ENCODE measurements at regions of chr9 and their contacts with region 1.

Region 1: GRCh38 chr9:127943731-127944144 is 6.1 kb upstream of the DPM2 start:
- DNase-seq: peak; percentile 96

Region 2: GRCh38 chr9:127980706-127981558 is 37.2 kb after region 1 on chr9 and contains the start of gene EEIG1:
- intact Hi-C with region 1: loop called in 1 of 2 experiments (anchors 5 kb)
- DNase-seq: peak; percentile 99
- total RNA-seq, gene EEIG1: 54.3 to 56.9 TPM

Region 3: DNA sequence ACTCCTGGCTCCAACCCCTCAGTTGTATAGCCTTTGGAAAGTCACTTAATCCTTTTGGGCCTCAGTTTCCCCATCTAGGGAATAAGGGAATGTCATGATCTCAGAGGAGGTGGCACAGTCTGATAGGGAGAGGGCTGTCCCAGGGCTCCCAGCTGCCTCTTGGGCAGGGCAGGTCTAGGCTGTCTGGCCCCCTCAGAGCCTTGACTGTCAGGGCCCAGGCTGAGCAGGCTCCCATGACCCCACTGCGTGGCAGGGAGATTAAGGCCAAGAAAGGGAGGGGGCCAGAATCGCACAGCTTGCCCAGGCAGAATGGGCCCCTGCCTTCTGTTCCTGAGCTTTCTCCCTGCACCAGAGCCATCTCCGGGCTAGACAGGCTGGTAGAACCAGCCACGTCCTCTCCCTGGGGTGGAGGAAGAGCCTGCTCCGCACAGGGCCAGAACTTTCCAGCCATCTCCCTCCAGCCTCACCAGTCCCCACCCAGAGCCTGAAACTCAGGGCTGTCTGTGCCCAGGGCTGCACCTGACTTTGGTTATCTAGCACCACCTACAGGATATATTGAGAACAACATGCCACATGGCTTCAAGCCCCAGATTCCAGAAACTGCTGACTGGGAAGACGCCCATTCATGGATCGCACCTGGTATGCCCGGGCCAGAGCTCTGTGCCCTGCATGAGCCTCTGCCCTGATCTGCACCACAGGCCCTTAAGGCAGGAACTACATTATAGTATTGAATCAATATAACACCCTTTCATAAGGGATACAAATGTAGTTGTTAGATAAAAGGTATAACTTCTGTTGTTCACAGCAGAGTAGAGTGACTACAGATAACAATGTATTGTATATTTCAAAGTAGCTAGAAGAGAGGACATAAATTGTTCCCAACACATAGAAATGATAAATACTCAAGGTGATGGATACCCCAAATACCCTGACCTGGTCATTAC is 91.4 kb after region 1 on chr9:
- intact Hi-C with region 1: loop called (anchors 2 to 5 kb)
- DNase-seq: peak; percentile 87

Region 4: GRCh38 chr9:128103589-128103962 is 159.8 kb after region 1 on chr9:
- intact Hi-C with region 1: loop called in 1 of 2 experiments (anchors 10 kb)
- DNase-seq: no peak

Region 5: DNA sequence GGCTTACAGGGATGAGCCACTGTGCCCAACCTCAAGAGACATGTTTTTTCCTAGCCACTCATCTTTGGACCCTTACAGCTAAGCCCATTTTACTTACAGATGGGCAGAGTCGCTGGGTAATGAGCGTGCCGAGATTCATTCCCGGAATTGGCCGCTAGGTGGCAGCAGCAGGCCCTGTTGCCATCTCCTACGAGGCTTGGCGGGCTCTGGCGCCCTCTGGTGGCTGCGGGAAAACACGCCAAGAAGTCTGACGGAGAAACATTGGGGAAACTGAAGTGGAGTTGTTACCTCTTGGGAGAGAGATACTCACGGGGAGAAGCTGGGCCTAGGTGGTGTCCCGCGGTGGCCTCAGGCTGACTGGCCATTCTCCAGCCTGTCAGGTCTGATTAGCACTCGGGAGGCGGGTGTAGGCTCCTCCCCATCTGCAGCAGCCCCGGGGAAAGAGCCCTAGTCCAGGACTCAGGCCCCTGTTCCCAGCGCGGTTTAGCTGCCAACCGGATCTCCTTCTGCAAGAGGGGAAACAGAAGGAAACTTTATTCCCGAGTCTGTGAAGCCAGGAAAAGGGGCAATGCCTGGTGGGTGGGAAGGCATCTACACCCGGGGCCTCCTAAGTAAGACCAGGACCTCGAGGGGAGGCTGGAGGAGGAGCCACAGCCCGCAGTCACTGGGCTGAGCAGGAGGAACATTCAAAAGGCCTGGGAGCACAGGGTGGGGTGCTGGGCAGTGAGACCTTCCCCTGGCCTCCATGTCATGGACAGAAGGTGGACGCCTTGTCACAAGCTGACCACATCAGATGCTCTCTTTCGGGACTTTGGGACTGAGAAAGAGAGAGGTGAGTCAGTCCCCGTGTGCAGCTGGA is 174.1 kb after region 1 on chr9:
- intact Hi-C with region 1: loop called in 1 of 2 experiments (anchors 5 kb)
- DNase-seq: peak; percentile 99

Measured in posterior vena cava (tissue), 2 donors.